ENCODE measurements at regions of chr21 and their contacts with region 1.

Region 1: GRCh38 chr21:35779690-35780570 is 280.4 kb downstream of the SETD4 start:
- DNase-seq: no peak
- ATAC-seq: no peak
- H3K4me3 ChIP-seq: no peak overlapping the region
- H3K4me3 Mint-ChIP-seq: no peak overlapping the region
- H3K27ac ChIP-seq: no peak overlapping the region
- H3K27ac Mint-ChIP-seq: no peak overlapping the region
- H3K4me1 ChIP-seq: no peaks in the 10 kb centered on the region
- H3K4me1 Mint-ChIP-seq: no peaks in the 10 kb centered on the region
- H3K27me3 ChIP-seq: peaks cover 2% of the 10 kb centered on the region
- H3K27me3 Mint-ChIP-seq: peaks cover 11 to 34% of the 10 kb centered on the region in 2 donors
- CTCF ChIP-seq: no peak

Region 2: GRCh38 chr21:35833991-35834390 is 54.1 kb after region 1 on chr21:
- intact Hi-C with region 1: loop called (anchors 10 kb)
- DNase-seq: no peak
- ATAC-seq: no peak
- H3K4me3 ChIP-seq: no peak overlapping the region
- H3K4me3 Mint-ChIP-seq: no peak overlapping the region
- H3K27ac ChIP-seq: no peak overlapping the region
- H3K27ac Mint-ChIP-seq: no peak overlapping the region
- H3K4me1 ChIP-seq: no peaks in the 10 kb centered on the region
- H3K4me1 Mint-ChIP-seq: peaks cover 0 to 4% of the 10 kb centered on the region in 2 donors
- H3K27me3 ChIP-seq: no peaks in the 10 kb centered on the region
- H3K27me3 Mint-ChIP-seq: peaks cover 6 to 12% of the 10 kb centered on the region in 2 donors
- CTCF ChIP-seq: no peak